IMR-90 (cell line): ENCODE measurements at regions of chr9 and their contacts with region 1.

Region 1: GRCh38 chr9:38687387-38687842 is 32.5 kb downstream of the FAM240B start:
- DNase-seq: no peak
- ATAC-seq: peak; percentile 61
- H3K4me3 ChIP-seq: no peak overlapping the region
- H3K27ac ChIP-seq: no peak overlapping the region
- H3K4me1 ChIP-seq: no peaks in the 10 kb centered on the region
- H3K27me3 ChIP-seq: no peaks in the 10 kb centered on the region; the same call in 1 of the 2 replicates
- CTCF ChIP-seq: no peak
- POLR2A ChIP-seq: no peak
- RAD21 ChIP-seq: no peak

Region 2: DNA sequence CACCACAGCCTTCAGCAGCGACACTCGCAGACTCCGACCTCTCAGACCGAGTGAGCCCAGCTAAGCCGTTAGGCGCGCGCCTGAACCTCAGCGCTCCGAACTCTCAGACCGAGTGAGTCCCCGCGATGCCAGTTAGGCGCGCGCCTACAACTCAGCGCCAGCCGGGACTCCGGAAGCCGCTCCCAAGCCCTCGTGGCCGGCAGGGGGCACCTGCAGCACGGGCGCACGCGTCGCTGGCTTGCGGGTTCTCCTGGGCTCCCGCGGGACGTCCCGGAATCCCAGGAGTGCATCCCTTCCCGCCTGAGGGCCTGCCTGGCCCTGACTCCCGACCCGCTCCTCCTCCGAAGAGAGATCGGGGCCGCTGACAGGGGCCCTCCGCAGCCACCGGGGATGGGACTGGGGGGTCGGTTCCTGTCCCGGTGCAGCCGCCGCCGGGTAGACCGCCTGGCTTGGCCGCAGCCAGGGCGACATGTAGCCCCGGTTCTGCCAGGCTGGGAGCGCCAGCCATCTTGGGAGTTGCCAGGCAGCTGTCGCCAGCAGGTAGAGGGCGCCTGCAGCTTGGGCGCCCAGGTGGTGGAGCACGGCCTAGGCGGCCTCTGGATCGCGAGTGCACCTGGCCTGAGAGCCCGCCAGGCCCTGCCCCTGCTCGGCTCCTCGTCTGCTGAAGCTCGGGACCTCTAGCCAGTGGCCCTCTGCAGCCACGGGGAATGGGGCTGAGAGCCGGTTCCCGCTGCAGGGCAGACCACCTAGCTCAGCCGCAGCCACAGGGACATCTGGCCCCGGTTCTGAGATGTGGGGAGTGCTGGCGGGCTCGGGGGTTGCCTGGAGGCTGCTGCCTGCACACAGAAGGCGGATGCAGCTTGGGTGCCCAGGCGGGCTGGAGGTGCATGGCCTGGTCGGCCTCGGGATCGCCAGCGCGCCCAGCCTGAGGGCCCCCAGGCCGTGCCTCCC is 66.7 kb before region 1 on chr9 and contains the start of gene ANKRD18A:
- CTCF ChIA-PET with region 1: no interaction called
- POLR2A ChIA-PET with region 1: no interaction called
- dilution Hi-C with region 1: no loop called
- in situ Hi-C with region 1: loop called (anchors 10 kb)
- intact Hi-C with region 1: no loop called
- DNase-seq: peak; percentile 41
- ATAC-seq: peak; percentile 92
- H3K4me3 ChIP-seq: peak within 1 kb of the TSS; percentile 17
- H3K27ac ChIP-seq: no peak within 1 kb of the TSS
- H3K4me1 ChIP-seq: no peaks in the 10 kb centered on the region
- H3K27me3 ChIP-seq: peaks cover 27% of the 10 kb centered on the region
- CTCF ChIP-seq: peak; percentile 55
- POLR2A ChIP-seq: no peak
- RAD21 ChIP-seq: peak; percentile 57
- total RNA-seq, gene ANKRD18A: not detected in 2 replicates

Region 3: GRCh38 chr9:38732885-38733284 is 45.5 kb after region 1 on chr9:
- CTCF ChIA-PET with region 1: no interaction called
- POLR2A ChIA-PET with region 1: no interaction called
- dilution Hi-C with region 1: no loop called
- in situ Hi-C with region 1: loop called (anchors 10 kb)
- intact Hi-C with region 1: no loop called
- DNase-seq: no peak
- ATAC-seq: no peak
- H3K4me3 ChIP-seq: no peak overlapping the region
- H3K27ac ChIP-seq: no peak overlapping the region
- H3K4me1 ChIP-seq: no peaks in the 10 kb centered on the region
- H3K27me3 ChIP-seq: no peaks in the 10 kb centered on the region
- CTCF ChIP-seq: no peak
- POLR2A ChIP-seq: no peak
- RAD21 ChIP-seq: no peak